ENCODE measurements at regions of chr14 and their contacts with region 1.

Region 1: GRCh38 chr14:89954070-89955028 is at the start of gene EFCAB11:
- DNase-seq: peak; percentile 85
- ATAC-seq: peak; percentile 83
- H3K4me3 Mint-ChIP-seq: peak within 1 kb of the TSS; percentile 99
- H3K27ac Mint-ChIP-seq: peak within 1 kb of the TSS; percentile 95
- H3K4me1 Mint-ChIP-seq: peaks cover 32% of the 10 kb centered on the region
- H3K27me3 Mint-ChIP-seq: no peaks in the 10 kb centered on the region
- CTCF ChIP-seq: no peak
- total RNA-seq, gene EFCAB11: 7.5 and 10.0 TPM in 2 replicates

Region 2: GRCh38 chr14:87992718-87993628 is 1961.4 kb before region 1 on chr14 and contains the start of gene GALC:
- CTCF ChIA-PET with region 1: no interaction called
- POLR2A ChIA-PET with region 1: interaction called, 6 read pairs
- intact Hi-C with region 1: loop called (anchors 2 kb)
- DNase-seq: peak; percentile 89
- ATAC-seq: peak; percentile 80
- H3K4me3 Mint-ChIP-seq: peak within 1 kb of the TSS; percentile 89
- H3K27ac Mint-ChIP-seq: peak within 1 kb of the TSS; percentile 99
- H3K4me1 Mint-ChIP-seq: peaks cover 41% of the 10 kb centered on the region
- H3K27me3 Mint-ChIP-seq: no peaks in the 10 kb centered on the region
- CTCF ChIP-seq: no peak
- total RNA-seq, gene GALC: 8.3 and 9.7 TPM in 2 replicates

Region 3: DNA sequence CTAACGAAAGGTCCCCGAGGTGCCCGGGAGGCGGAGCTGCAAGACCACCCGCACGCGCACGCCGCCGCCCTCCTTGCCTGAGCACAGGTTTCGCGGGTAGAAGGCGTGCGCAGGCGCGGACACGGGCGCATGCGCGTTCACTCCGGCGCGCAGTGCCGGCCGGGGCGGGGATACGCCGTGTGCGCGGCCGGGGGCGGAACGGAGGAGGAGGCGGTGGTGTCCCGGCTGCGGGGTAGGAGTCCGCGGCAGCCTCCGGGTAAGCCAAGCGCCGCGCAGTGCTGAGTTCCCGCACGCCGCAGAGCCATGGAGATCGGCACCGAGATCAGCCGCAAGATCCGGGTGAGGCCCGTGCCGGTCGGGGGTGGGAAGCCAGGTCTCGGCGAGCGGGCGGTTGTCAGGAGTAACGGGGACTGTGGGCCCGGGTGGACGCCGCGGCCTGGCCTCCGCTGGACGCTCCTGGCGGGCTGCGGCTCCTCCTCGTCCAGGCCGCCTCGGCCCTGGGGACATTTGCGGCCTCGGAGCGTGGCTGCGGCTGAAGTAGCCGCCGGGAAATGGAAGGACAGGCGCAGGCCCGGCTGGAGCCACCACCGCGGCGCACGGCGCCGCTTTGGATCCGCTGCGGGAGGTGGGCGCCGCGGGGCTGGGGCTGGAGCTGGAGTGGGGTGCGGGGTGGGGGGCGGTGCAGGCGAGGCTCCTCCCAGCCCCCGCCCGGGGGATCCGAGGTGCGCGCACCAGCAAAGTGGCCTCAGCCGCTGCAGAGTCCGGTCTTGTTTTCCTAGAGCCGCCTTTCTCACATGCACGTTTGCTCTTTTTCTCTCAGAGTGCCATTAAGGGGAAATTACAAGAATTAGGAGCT is 1391.3 kb before region 1 on chr14 and contains the start of gene ZC3H14:
- CTCF ChIA-PET with region 1: no interaction called
- POLR2A ChIA-PET with region 1: no interaction called
- intact Hi-C with region 1: loop called (anchors 2 kb)
- DNase-seq: peak; percentile 87
- ATAC-seq: peak; percentile 97
- H3K4me3 Mint-ChIP-seq: peak within 1 kb of the TSS; percentile 96
- H3K27ac Mint-ChIP-seq: peak within 1 kb of the TSS; percentile 86
- H3K4me1 Mint-ChIP-seq: peaks cover 18% of the 10 kb centered on the region
- H3K27me3 Mint-ChIP-seq: peaks cover 6% of the 10 kb centered on the region
- CTCF ChIP-seq: no peak
- total RNA-seq, gene ZC3H14: 38.7 and 45.0 TPM in 2 replicates

Region 4: DNA sequence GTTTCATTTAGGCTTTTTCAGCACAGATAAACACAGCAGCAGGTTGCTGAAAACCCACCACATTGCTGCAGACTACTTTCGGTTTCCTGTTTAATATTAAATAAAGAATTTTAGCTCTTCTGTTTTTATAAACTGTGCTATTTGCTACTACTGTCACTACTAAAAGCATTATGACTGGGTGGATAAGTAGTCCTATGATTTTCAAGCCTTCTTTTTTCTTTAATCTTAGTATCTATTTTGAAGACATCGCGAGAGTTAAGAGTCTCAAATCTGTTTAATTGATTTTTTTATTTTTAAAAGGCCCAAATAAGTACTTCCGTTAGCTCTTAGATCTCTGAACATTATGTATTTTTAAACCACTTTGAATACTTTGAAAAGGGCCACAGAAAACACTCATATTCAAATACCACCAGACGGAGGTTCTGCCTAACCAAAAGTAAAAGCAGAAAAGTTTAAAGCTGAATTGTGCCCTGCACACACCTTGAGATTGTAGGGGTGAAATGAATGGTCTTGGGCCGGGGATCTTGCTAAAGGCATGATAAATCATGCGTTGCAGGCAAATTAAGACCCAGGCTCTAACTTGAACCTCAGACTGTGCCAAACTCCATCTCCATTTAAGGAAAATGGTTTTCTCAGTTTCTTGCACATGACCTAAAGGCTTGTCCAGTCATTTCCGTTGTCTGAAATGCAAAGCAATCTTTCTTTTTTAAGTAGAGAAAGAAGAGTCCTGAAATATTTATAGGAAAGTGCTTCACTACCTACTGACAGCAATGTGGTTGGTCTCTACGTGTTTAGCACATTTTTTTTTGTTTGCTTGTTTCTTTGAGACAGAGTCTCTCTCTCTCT is 523.7 kb before region 1 on chr14:
- CTCF ChIA-PET with region 1: no interaction called
- POLR2A ChIA-PET with region 1: no interaction called
- intact Hi-C with region 1: loop called (anchors 5 kb)
- DNase-seq: no peak
- ATAC-seq: peak; percentile 93
- H3K4me3 Mint-ChIP-seq: peak overlapping the region; percentile 80
- H3K27ac Mint-ChIP-seq: peak overlapping the region; percentile 86
- H3K4me1 Mint-ChIP-seq: peaks cover 83% of the 10 kb centered on the region
- H3K27me3 Mint-ChIP-seq: no peaks in the 10 kb centered on the region
- CTCF ChIP-seq: no peak

Region 5: GRCh38 chr14:89936658-89937185 is 17.6 kb before region 1 on chr14:
- CTCF ChIA-PET with region 1: no interaction called
- POLR2A ChIA-PET with region 1: no interaction called
- intact Hi-C with region 1: loop called (anchors 1 kb)
- DNase-seq: no peak
- ATAC-seq: no peak
- H3K4me3 Mint-ChIP-seq: no peak overlapping the region
- H3K27ac Mint-ChIP-seq: no peak overlapping the region
- H3K4me1 Mint-ChIP-seq: no peaks in the 10 kb centered on the region
- H3K27me3 Mint-ChIP-seq: no peaks in the 10 kb centered on the region
- CTCF ChIP-seq: no peak

Region 6: DNA sequence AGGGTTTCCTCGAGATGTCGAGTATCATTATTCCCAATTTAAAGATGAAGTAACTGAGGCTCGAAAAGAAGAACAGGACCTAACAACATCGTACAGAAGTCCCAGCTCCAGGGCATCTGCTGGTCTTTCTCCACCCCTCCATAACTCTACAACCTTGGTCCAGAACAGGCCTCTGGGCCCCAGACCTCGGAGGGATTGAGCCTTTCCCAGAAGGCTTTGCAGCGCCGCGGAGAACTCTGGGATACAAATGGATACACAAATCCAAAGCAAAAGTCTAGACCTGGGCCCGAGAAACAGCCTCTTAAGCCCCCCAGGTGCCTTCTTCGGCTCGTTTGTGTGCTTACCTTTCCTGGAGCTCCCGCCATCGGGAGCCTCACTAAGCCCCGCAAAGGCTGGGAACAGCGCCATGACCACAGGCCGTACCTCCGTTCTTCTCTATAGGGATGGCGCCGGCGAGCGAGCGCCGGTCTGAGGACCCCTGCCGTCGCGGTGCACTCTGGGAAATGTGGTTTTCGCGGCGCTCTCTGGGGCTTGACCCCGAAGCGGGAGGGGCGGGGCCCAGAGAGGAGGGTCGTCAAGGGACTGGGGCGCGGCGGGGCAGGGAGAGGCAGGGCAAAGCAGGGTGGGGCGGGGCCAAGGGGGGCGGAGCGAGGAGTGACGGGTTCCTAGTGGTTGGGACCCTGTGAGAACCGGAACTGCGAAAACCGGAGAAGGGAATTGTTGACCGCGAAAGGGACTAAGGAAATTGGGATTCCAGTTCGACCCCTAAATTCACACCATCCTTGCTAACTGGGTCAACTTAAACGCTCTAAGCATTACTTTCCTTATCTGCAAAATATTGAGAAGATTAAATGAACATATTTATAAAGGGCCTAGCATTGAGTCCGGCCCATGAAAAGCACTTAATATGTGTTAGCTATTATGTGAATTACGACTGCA is 377.4 kb after region 1 on chr14 and contains the start of gene NRDE2:
- CTCF ChIA-PET with region 1: no interaction called
- POLR2A ChIA-PET with region 1: no interaction called
- intact Hi-C with region 1: loop called (anchors 1 kb)
- DNase-seq: peak; percentile 95
- ATAC-seq: peak; percentile 98
- H3K4me3 Mint-ChIP-seq: peak within 1 kb of the TSS; percentile 93
- H3K27ac Mint-ChIP-seq: peak within 1 kb of the TSS; percentile 95
- H3K4me1 Mint-ChIP-seq: peaks cover 25% of the 10 kb centered on the region
- H3K27me3 Mint-ChIP-seq: peaks cover 19% of the 10 kb centered on the region
- CTCF ChIP-seq: no peak
- total RNA-seq, gene NRDE2: 35.3 and 37.1 TPM in 2 replicates

Region 7: DNA sequence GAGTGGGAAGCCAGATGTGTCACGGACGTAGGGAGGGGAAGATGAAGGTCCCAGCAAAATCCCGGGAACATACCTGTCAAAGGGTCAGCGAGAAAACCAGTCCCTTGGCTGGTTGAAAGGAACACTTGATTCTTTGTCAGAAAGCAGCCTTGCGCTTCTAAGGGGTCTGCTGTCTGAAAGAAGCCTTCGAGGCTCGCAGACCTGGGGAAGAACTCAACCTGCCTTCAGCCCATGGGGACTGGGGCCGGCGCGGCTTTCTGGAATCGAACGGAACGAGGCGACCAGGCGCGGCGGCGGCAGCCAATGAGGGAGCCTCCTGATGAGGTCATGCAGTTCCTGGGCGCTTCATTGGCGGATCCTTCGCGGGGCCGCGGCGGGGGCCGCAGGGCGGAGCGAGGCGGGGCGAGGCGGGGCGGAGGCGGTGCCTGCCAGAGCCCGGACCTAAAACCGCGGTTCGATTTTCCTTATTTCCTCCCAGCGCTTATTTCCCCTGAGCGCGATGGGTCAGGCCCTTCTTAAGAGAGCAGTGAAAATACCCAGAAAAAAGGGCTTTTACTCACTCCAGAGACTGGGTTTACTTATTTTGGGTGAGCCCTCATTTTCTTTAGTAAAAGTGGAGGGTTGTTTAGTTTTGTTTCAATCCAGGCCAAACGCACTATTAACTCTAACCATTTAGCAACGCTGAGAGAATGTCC is 873.7 kb after region 1 on chr14:
- CTCF ChIA-PET with region 1: no interaction called
- POLR2A ChIA-PET with region 1: no interaction called
- intact Hi-C with region 1: loop called (anchors 1 kb)
- DNase-seq: peak; percentile 88
- ATAC-seq: peak; percentile 100
- H3K4me3 Mint-ChIP-seq: peak overlapping the region; percentile 81
- H3K27ac Mint-ChIP-seq: peak overlapping the region; percentile 65
- H3K4me1 Mint-ChIP-seq: peaks cover 12% of the 10 kb centered on the region
- H3K27me3 Mint-ChIP-seq: no peaks in the 10 kb centered on the region
- CTCF ChIP-seq: no peak